ENCODE measurements at regions of chr5 and their contacts with region 1.

Region 1: DNA sequence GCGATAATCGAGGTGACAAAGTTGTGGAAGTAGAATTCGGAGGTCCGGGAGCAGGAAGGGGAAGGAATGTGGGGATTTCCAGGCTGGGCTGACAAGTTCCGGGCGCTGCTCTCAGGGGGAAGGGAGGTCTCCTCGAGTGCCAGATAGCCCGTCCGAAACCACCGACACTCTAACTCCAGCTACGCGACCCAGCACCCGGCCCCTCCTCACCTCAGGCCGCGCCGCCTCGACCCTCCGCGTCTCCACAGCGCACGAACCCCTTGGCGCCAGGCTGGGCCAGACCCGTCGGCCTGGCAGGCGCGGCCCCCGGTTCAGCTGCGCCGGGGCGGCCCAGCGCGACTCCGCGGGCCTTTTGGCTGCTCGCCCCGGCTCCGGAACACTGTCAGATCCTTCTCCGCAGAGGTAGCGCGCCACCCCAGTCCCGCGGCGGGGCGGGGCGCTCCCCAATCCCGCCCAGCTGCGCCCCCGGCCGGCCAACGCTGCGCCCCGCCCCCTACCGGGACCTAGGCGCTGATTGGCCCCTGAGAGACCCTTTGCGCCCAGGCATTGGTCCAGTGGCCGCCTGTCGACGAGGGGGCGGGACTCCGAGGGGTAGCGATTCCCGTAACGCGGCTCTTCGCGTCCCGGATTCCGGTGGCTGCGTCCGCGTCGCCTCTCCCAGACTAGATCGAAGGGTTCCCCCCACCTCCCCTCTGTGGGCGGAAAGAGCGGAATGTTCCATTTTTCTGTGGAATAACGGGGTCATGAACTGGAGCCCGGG is at the start of gene IL6ST:
- DNase-seq: peak; percentile 96 to 97
- ATAC-seq: peak; percentile 84 to 87
- H3K4me3 ChIP-seq: peak within 1 kb of the TSS; percentile 82 to 95 (median 84)
- H3K27ac ChIP-seq: peak within 1 kb of the TSS; percentile 95 to 99 (median 98)
- H3K4me1 ChIP-seq: peaks cover 35 to 36% of the 10 kb centered on the region in 2 donors
- H3K27me3 ChIP-seq: no peaks in the 10 kb centered on the region
- CTCF ChIP-seq: peak in 1 of 5 experiments; percentile 17
- POLR2A ChIP-seq: peak; percentile 96 to 98
- total RNA-seq, gene IL6ST: 128 to 228 (median 167) TPM

Region 2: DNA sequence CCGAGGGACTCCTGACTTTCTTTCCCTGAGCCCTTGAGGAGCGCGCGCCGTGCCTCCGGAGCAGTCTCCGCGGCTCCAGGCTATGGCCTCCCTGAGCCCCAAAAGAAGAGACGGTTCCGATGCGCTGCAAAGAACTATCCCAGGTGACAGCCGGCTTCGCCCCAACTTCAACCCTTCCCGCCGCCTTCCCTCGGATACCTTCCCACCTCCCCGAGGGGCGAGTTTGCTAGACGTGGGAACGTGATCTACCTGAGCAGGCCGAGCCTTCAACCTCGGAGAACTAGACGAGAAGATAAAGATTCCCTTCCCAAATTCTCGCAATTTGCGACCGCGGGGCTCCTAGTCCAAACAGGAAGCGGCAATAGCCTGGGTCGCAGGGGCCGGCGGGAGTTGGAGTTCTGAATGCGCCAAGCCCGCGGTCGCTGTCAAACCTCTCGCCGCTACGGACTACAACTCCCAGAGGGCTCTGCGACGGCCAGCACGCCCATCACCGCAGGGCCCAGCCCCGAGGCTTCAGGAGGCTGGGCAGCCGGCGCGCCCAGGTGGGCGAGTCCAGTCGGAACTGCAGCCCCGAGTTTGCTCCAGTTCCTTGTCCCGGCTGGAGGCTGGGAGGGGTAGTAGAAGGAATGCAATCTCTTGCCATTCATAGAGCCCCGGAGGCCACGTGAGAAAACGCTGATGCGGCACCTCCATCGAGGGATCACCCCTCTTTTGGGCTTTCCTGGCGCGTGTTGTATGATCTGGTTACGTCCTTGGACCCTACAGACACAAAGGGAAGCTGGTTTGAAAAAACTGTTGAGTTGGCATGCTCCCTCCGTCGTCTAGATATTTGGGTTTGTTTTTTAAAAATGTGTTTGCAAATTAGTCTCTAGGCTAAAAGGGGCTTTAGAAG is 282.5 kb before region 1 on chr5 and contains the start of gene SLC38A9:
- in situ Hi-C with region 1: no loop called
- intact Hi-C with region 1: loop called (anchors 1 kb)
- DNase-seq: peak; percentile 92
- ATAC-seq: peak; percentile 98 to 99
- H3K4me3 ChIP-seq: peak within 1 kb of the TSS; percentile 79 to 94 (median 87)
- H3K27ac ChIP-seq: peak within 1 kb of the TSS; percentile 74 to 85 (median 80)
- H3K4me1 ChIP-seq: peaks cover 5 to 8% of the 10 kb centered on the region in 2 donors
- H3K27me3 ChIP-seq: no peaks in the 10 kb centered on the region
- CTCF ChIP-seq: no peak
- POLR2A ChIP-seq: no peak
- total RNA-seq, gene SLC38A9: 5.4 to 11.9 (median 10.2) TPM

Region 3: GRCh38 chr5:56056875-56057274 is 62.1 kb after region 1 on chr5:
- in situ Hi-C with region 1: no loop called
- intact Hi-C with region 1: loop called (anchors 5 kb)
- DNase-seq: no peak
- ATAC-seq: no peak
- H3K4me3 ChIP-seq: no peak overlapping the region
- H3K27ac ChIP-seq: no peak overlapping the region
- H3K4me1 ChIP-seq: peaks cover 11 to 12% of the 10 kb centered on the region in 2 donors
- H3K27me3 ChIP-seq: no peaks in the 10 kb centered on the region
- CTCF ChIP-seq: no peak
- POLR2A ChIP-seq: no peak

Region 4: GRCh38 chr5:56814963-56815658 is 820.4 kb after region 1 on chr5 and contains the start of gene MAP3K1:
- in situ Hi-C with region 1: no loop called
- intact Hi-C with region 1: loop called (anchors 2 kb)
- DNase-seq: peak; percentile 24 to 55
- ATAC-seq: peak; percentile 79
- H3K4me3 ChIP-seq: peak within 1 kb of the TSS; percentile 66 to 82 (median 76)
- H3K27ac ChIP-seq: peak within 1 kb of the TSS; percentile 75 to 94 (median 84)
- H3K4me1 ChIP-seq: peaks cover 28 to 38% of the 10 kb centered on the region in 2 donors
- H3K27me3 ChIP-seq: no peaks in the 10 kb centered on the region
- CTCF ChIP-seq: no peak
- POLR2A ChIP-seq: peak in 1 of 2 donors; percentile 13
- total RNA-seq, gene MAP3K1: 4.2 to 6.8 (median 5.4) TPM

Region 5: DNA sequence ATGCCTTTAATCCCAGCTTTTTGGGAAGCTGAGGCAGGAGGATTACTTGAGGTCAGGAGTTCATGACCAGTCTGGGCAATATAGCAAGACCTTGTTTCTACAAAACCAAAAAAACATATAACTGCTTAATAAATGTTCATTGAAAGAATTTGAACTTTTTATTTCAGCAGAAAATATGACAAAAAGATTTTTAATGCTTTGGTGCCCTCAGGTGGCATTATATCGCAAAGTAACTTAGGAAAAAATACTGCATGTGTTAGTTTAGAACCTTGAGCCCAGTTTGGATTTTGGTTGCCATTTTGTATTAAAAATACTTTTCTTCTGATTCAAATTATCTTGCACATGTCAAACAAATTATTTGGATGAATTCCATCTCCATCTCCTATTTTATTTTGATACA is 1282.3 kb after region 1 on chr5:
- in situ Hi-C with region 1: no loop called
- intact Hi-C with region 1: no loop called
- DNase-seq: no peak
- ATAC-seq: no peak
- H3K4me3 ChIP-seq: no peak overlapping the region
- H3K27ac ChIP-seq: no peak overlapping the region
- H3K4me1 ChIP-seq: no peaks in the 10 kb centered on the region
- H3K27me3 ChIP-seq: no peaks in the 10 kb centered on the region
- CTCF ChIP-seq: peak in 1 of 5 experiments; percentile 26
- POLR2A ChIP-seq: no peak